ENCODE measurements at regions of chr14 and their contacts with region 1.

Region 1: GRCh38 chr14:53055003-53055402 is 98.1 kb downstream of the DDHD1 start:
- H3K4me3 Mint-ChIP-seq: no peak overlapping the region
- H3K27ac Mint-ChIP-seq: no peak overlapping the region
- H3K4me1 Mint-ChIP-seq: no peaks in the 10 kb centered on the region
- H3K27me3 Mint-ChIP-seq: no peaks in the 10 kb centered on the region

Region 2: GRCh38 chr14:52663850-52664249 is 391.2 kb before region 1 on chr14:
- intact Hi-C with region 1: loop called (anchors 10 kb)
- H3K4me3 Mint-ChIP-seq: no peak overlapping the region
- H3K27ac Mint-ChIP-seq: no peak overlapping the region
- H3K4me1 Mint-ChIP-seq: no peaks in the 10 kb centered on the region
- H3K27me3 Mint-ChIP-seq: no peaks in the 10 kb centered on the region

Measured in dendritic cell treated with granulocyte-macrophage colony-stimulating factor and Interleukin-4, amounts not matched to agents 40 ng/mL and 50 ng/mL, for 4 days (primary cell).